Activated CD8-positive, alpha-beta T cell treated with anti-CD3 and anti-CD28 coated beads, Interleukin-2, amount 10 ng/mL, durations not matched to agents 7 days and 5 days (primary cell): ENCODE measurements at regions of chr1 and their contacts with region 1.

Region 1: GRCh38 chr1:202998836-202999750 is 8.1 kb upstream of the TMEM183A start:
- DNase-seq: peak; percentile 81
- ATAC-seq: peak; percentile 44
- H3K4me3 Mint-ChIP-seq: peak overlapping the region; percentile 59
- H3K27ac Mint-ChIP-seq: peak overlapping the region; percentile 50
- H3K4me1 Mint-ChIP-seq: peaks cover 19% of the 10 kb centered on the region
- H3K27me3 Mint-ChIP-seq: peaks cover 30% of the 10 kb centered on the region

Region 2: GRCh38 chr1:202750758-202751157 is 248.3 kb before region 1 on chr1:
- CTCF ChIA-PET with region 1: interaction called, 14 read pairs
- POLR2A ChIA-PET with region 1: no interaction called
- DNase-seq: no peak
- ATAC-seq: no peak
- H3K4me3 Mint-ChIP-seq: no peak overlapping the region
- H3K27ac Mint-ChIP-seq: no peak overlapping the region
- H3K4me1 Mint-ChIP-seq: no peaks in the 10 kb centered on the region
- H3K27me3 Mint-ChIP-seq: no peaks in the 10 kb centered on the region

Region 3: GRCh38 chr1:202888531-202889360 is 110.3 kb before region 1 on chr1 and contains the start of gene RABIF:
- CTCF ChIA-PET with region 1: interaction called, 16 read pairs
- POLR2A ChIA-PET with region 1: interaction called, 3 read pairs
- DNase-seq: peak; percentile 97
- ATAC-seq: peak; percentile 96
- H3K4me3 Mint-ChIP-seq: peak within 1 kb of the TSS; percentile 94
- H3K27ac Mint-ChIP-seq: peak within 1 kb of the TSS; percentile 98
- H3K4me1 Mint-ChIP-seq: peaks cover 19% of the 10 kb centered on the region
- H3K27me3 Mint-ChIP-seq: no peaks in the 10 kb centered on the region
- total RNA-seq, gene RABIF: 13.6 TPM

Region 4: DNA sequence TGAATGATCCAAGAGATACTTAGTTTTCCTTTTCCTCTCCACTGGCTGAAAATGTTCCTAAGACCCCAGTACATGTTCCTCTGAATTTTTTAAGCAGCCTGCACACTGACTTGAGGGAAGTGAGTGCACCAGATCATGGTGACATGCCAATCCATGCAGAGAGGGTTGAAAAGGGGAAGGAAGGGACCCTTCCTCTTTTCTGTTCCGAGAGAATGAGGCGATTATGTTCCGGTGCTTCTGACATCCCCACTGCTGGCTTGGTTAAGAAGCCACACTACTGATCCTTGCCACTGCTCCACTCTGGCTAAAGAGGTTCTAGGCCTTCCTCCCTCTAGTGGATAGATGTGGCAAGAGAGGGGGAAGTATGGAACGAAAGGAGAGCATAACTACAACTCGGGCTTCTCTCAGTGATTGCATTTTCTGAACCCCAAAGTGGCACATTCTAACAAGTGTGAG is 30.2 kb before region 1 on chr1:
- CTCF ChIA-PET with region 1: interaction called, 28 read pairs
- POLR2A ChIA-PET with region 1: interaction called, 4 read pairs
- DNase-seq: peak; percentile 60
- ATAC-seq: peak; percentile 54
- H3K4me3 Mint-ChIP-seq: no peak overlapping the region
- H3K27ac Mint-ChIP-seq: peak overlapping the region; percentile 44
- H3K4me1 Mint-ChIP-seq: peaks cover 30% of the 10 kb centered on the region
- H3K27me3 Mint-ChIP-seq: peaks cover 4% of the 10 kb centered on the region

Region 5: DNA sequence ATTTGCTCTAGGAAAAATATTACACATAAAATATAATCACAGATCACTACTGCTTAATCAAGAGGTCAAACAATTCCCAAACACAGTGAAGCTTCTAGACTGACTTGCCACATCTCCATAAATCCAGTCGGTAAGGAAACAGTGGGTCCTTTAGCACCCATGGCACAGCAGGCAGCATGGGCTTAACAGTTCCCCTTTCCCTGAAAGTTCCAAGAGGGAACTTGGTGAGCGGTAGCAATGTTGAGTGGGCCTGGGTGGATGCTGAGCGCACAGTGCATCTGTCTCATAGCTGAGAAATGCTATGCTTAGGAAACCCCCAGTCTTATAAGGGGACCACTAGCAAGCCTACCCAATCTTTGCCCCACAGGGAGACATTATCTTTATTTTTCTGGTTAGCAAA is 24.2 kb before region 1 on chr1:
- CTCF ChIA-PET with region 1: interaction called, 19 read pairs
- POLR2A ChIA-PET with region 1: no interaction called
- DNase-seq: no peak
- ATAC-seq: no peak
- H3K4me3 Mint-ChIP-seq: no peak overlapping the region
- H3K27ac Mint-ChIP-seq: no peak overlapping the region
- H3K4me1 Mint-ChIP-seq: no peaks in the 10 kb centered on the region
- H3K27me3 Mint-ChIP-seq: peaks cover 38% of the 10 kb centered on the region

Region 6: DNA sequence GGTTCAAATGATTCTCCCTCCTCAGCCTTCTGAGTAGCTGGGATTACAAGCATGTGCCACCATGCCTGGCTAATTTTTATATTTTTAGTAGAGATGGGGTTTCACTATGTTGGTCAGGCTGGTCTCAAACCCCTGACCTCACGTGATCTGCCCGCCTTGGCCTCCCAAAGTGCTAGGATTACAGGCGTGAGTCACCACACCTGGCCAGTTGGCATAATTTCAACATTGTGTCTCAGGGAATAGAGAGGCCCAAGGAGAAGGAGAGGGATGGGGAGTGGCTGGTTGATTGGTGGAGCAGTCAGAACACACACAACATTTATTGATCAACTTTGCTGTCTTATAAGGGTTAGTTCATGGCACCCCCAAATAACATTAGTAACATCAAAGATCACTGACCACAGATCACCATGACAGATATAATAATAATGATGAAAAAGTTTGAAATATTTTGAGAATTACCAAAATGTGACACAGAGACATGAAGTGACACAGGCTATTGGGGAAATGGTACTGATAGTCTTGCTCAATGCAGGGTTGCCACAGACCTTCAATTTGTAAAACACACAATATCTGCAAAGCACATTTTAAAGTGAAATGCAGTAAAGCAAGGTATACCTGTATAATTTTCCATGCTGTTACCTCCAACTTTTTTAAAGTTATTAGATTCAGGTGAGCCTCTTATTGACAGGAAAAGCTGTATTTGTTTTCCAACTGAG is 16.2 kb before region 1 on chr1:
- CTCF ChIA-PET with region 1: interaction called, 12 read pairs
- POLR2A ChIA-PET with region 1: no interaction called
- DNase-seq: no peak
- ATAC-seq: no peak
- H3K4me3 Mint-ChIP-seq: no peak overlapping the region
- H3K27ac Mint-ChIP-seq: no peak overlapping the region
- H3K4me1 Mint-ChIP-seq: peaks cover 3% of the 10 kb centered on the region
- H3K27me3 Mint-ChIP-seq: peaks cover 19% of the 10 kb centered on the region

Region 7: DNA sequence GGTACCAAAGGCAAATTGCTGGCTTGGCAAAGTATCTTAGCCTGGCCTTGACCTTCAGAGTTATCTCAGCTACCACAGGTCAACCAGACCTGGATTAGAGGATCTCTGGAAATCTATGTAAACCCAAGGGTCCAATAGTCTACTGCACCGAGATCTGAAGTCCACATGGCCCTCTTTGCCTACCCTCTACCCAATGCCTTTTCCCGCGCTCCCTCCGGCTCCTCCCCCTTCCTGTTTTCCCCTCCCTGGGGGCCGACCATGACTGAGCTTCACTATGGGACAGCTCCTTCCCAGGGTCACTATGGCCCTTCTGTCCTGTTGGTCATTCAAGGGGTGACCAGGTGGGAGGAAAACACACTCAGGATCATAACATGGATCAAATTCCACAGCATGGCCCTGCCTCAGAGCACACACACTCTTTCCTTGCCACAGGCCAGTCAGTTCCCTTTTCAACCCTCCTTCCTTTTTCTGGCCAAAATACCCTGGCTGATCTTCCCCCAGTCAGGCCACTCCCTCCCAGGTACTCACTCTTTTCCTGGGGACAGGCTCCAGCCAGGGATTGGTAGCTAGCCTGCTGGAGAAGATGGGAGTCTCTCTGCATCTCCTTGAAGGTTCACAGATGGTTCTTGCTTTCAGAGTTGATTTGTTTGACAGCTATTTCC is 11.0 kb before region 1 on chr1:
- CTCF ChIA-PET with region 1: interaction called, 19 read pairs
- POLR2A ChIA-PET with region 1: no interaction called
- DNase-seq: no peak
- ATAC-seq: no peak
- H3K4me3 Mint-ChIP-seq: no peak overlapping the region
- H3K27ac Mint-ChIP-seq: no peak overlapping the region
- H3K4me1 Mint-ChIP-seq: no peaks in the 10 kb centered on the region
- H3K27me3 Mint-ChIP-seq: peaks cover 16% of the 10 kb centered on the region

Region 8: DNA sequence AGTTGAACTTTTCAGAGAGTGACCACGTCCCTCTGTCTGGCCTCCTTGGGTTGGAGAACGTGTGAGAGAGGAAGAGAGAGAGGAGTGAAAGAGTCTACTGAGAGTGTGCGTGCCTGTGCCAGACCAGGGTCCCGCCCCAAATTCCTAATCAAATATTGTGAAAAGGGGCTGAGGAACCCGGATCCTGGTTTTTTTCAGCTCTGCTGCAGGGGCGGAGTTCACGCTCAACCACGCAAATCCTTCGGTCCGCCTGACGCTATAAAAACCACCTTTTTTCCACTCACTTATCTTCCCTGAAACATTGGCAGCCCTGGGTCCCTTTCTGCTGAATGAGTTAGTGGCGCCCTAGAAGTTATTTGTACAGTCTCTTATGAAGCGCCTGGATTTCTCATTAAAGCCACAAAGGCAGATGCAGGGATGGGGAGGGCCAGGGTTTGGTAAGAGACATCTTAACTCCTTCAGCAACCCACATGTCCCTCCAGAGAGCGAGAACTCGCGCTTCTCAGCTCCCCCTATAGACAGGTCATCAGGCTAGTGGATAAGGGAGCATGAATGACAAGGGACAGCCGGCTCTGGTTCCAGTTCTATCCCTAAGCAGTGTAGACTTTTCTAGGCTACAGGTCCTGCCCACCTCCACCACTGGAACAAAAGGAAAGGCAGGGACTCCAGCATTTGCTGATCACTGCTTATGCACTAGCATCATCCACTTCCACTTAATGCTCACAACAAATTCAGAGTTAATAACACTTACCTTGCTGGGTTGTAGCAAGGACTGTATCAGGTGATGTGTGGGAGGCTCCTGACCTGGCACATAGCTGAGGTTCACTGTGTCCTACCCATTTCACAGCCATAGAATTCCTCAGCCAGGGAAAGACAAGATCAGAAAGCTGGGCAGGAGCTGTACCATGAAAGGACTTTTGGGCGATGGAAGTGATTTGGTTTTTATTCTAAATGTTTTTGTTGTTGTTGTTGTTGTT is 352.2 kb after region 1 on chr1 and contains the start of gene FMOD:
- CTCF ChIA-PET with region 1: no interaction called
- POLR2A ChIA-PET with region 1: no interaction called
- DNase-seq: no peak
- ATAC-seq: peak; percentile 56
- H3K4me3 Mint-ChIP-seq: no peak within 1 kb of the TSS
- H3K27ac Mint-ChIP-seq: no peak within 1 kb of the TSS
- H3K4me1 Mint-ChIP-seq: peaks cover 6% of the 10 kb centered on the region
- H3K27me3 Mint-ChIP-seq: peaks cover 28% of the 10 kb centered on the region
- total RNA-seq, gene FMOD: not detected